Activated T-helper 1 cell treated with anti-CD3 and anti-CD28 coated beads, Interleukin-12 subunit alpha, Interleukin-12 subunit beta, Interleukin-2, Interleukin-4 antibody, amounts not matched to agents 30 ng/mL and 10 ng/mL and 1 ng/mL, durations not matched to agents 14 hours and 24 hours and 36 hours (primary cell): ENCODE measurements at regions of chr4 and their contacts with region 1.

Region 1: GRCh38 chr4:102815981-102816380 is 11.4 kb downstream of the UBE2D3 start:
- DNase-seq: no peak
- H3K4me3 Mint-ChIP-seq: no peak overlapping the region
- H3K27ac Mint-ChIP-seq: peak overlapping the region; percentile 84
- H3K4me1 Mint-ChIP-seq: peaks cover 87% of the 10 kb centered on the region
- H3K27me3 Mint-ChIP-seq: no peaks in the 10 kb centered on the region

Region 2: GRCh38 chr4:102789317-102789717 is 26.7 kb before region 1 on chr4:
- intact Hi-C with region 1: loop called (anchors 2 kb)
- DNase-seq: no peak
- H3K4me3 Mint-ChIP-seq: no peak overlapping the region
- H3K27ac Mint-ChIP-seq: peak overlapping the region; percentile 52
- H3K4me1 Mint-ChIP-seq: peaks cover 38% of the 10 kb centered on the region
- H3K27me3 Mint-ChIP-seq: no peaks in the 10 kb centered on the region

Region 3: GRCh38 chr4:102935716-102936115 is 119.7 kb after region 1 on chr4:
- intact Hi-C with region 1: no loop called
- DNase-seq: no peak
- H3K4me3 Mint-ChIP-seq: no peak overlapping the region
- H3K27ac Mint-ChIP-seq: no peak overlapping the region
- H3K4me1 Mint-ChIP-seq: no peaks in the 10 kb centered on the region
- H3K27me3 Mint-ChIP-seq: peaks cover 6% of the 10 kb centered on the region